Calu3 (cell line): ENCODE measurements at regions of chr4 and their contacts with region 1.

Region 1: GRCh38 chr4:112145326-112145819 is at the start of gene FAM241A:
- DNase-seq: peak; percentile 82
- H3K4me3 Mint-ChIP-seq: peak within 1 kb of the TSS; percentile 85
- H3K27ac Mint-ChIP-seq: peak within 1 kb of the TSS; percentile 47
- H3K4me1 Mint-ChIP-seq: peaks cover 8% of the 10 kb centered on the region
- H3K27me3 Mint-ChIP-seq: no peaks in the 10 kb centered on the region
- CTCF ChIP-seq: no peak
- total RNA-seq, gene FAM241A: 1.4 and 1.6 TPM in 2 replicates

Region 2: GRCh38 chr4:112109186-112110058 is 36.0 kb before region 1 on chr4:
- CTCF ChIA-PET with region 1: no interaction called
- intact Hi-C with region 1: loop called (anchors 5 kb)
- DNase-seq: no peak
- H3K4me3 Mint-ChIP-seq: no peak overlapping the region
- H3K27ac Mint-ChIP-seq: no peak overlapping the region
- H3K4me1 Mint-ChIP-seq: peaks cover 35% of the 10 kb centered on the region
- H3K27me3 Mint-ChIP-seq: no peaks in the 10 kb centered on the region
- CTCF ChIP-seq: no peak

Region 3: GRCh38 chr4:112923516-112923915 is 778.1 kb after region 1 on chr4:
- CTCF ChIA-PET with region 1: no interaction called
- intact Hi-C with region 1: no loop called
- DNase-seq: no peak
- H3K4me3 Mint-ChIP-seq: no peak overlapping the region
- H3K27ac Mint-ChIP-seq: no peak overlapping the region
- H3K4me1 Mint-ChIP-seq: no peaks in the 10 kb centered on the region
- H3K27me3 Mint-ChIP-seq: no peaks in the 10 kb centered on the region
- CTCF ChIP-seq: no peak